ENCODE measurements at regions of chr1 and their contacts with region 1.

Region 1: DNA sequence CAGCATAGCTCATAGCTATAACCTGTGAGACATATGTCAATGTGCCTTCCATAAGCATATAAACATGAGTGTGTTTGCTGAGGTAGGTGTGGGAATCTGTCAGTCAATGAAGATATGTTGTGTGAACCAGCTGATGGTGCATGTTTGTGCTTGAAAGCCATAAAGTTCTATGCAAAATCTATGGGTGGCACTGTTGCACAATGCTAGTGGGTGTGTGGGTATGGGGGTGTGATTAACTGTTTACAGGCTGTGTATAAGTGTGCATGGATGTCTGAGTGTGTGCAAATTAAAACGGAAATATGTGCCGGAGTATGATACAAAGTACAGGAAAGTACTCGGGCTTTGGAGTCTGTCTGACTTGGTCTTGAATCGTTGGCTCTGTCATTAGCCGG is 1.0 kb upstream of the ATP2B4 start:
- DNase-seq: peak in 8 of 9 experiments; percentile 38 to 91 (median 72)
- ATAC-seq: peak; percentile 63
- H3K4me3 ChIP-seq: peak overlapping the region; percentile 77 to 89
- H3K4me3 Mint-ChIP-seq: peak overlapping the region; percentile 91
- H3K27ac ChIP-seq: peak overlapping the region; percentile 58 to 81
- H3K27ac Mint-ChIP-seq: peak overlapping the region; percentile 81
- H3K4me1 ChIP-seq: peaks cover 41% of the 10 kb centered on the region
- H3K4me1 Mint-ChIP-seq: peaks cover 44% of the 10 kb centered on the region
- H3K27me3 ChIP-seq: no peaks in the 10 kb centered on the region
- H3K27me3 Mint-ChIP-seq: no peaks in the 10 kb centered on the region
- CTCF ChIP-seq: peak; percentile 78

Region 2: GRCh38 chr1:203267347-203267846 is 358.2 kb before region 1 on chr1:
- CTCF ChIA-PET with region 1: interaction called, 35 read pairs
- POLR2A ChIA-PET with region 1: no interaction called
- intact Hi-C with region 1: loop called (anchors 5 kb)
- DNase-seq: peak; percentile 66 to 92 (median 82)
- ATAC-seq: peak; percentile 58
- H3K4me3 ChIP-seq: peak overlapping the region; percentile 67 to 76
- H3K4me3 Mint-ChIP-seq: peak overlapping the region; percentile 89
- H3K27ac ChIP-seq: peak overlapping the region; percentile 50 to 68
- H3K27ac Mint-ChIP-seq: peak overlapping the region; percentile 82
- H3K4me1 ChIP-seq: peaks cover 25% of the 10 kb centered on the region
- H3K4me1 Mint-ChIP-seq: peaks cover 20% of the 10 kb centered on the region
- H3K27me3 ChIP-seq: no peaks in the 10 kb centered on the region
- H3K27me3 Mint-ChIP-seq: no peaks in the 10 kb centered on the region
- CTCF ChIP-seq: peak; percentile 95

Region 3: DNA sequence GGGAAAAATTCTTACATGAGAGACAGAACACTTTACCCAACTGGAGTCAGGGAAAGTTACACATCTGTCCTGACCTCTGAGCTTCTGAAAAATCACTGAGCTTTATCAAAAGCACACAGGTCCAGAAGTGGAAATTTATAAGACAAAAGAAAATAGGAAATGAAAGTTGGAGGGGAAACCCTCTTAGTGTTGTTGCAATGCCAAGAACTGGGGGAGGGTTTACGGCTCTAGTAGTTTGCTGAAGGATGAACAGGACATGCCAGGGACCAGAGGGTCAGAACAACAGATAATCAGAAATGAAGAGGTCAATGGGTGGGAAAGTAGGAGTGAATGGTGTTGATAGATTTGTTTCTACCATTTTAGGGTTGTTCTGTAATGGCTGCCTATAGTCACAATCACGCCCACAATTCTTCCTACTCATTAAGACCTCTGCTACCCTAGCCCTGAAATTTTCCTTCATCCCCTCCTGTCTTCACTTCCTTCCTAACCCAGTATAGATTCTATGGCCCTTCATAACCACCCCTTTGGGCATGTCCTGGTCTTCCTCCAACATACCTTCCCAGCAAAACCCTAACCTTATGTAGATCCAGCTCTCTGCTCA is 244.4 kb before region 1 on chr1:
- CTCF ChIA-PET with region 1: no interaction called
- POLR2A ChIA-PET with region 1: no interaction called
- intact Hi-C with region 1: no loop called
- DNase-seq: peak in 1 of 9 experiments; percentile 16
- ATAC-seq: no peak
- H3K4me3 ChIP-seq: no peak overlapping the region
- H3K4me3 Mint-ChIP-seq: no peak overlapping the region
- H3K27ac ChIP-seq: no peak overlapping the region
- H3K27ac Mint-ChIP-seq: no peak overlapping the region
- H3K4me1 ChIP-seq: no peaks in the 10 kb centered on the region
- H3K4me1 Mint-ChIP-seq: no peaks in the 10 kb centered on the region
- H3K27me3 ChIP-seq: no peaks in the 10 kb centered on the region
- H3K27me3 Mint-ChIP-seq: peaks cover 16% of the 10 kb centered on the region
- CTCF ChIP-seq: no peak

Region 4: GRCh38 chr1:203486618-203487370 is 138.8 kb before region 1 on chr1:
- CTCF ChIA-PET with region 1: interaction called, 10 read pairs
- POLR2A ChIA-PET with region 1: no interaction called
- intact Hi-C with region 1: no loop called
- DNase-seq: peak in 1 of 9 experiments; percentile 15
- ATAC-seq: no peak
- H3K4me3 ChIP-seq: peak overlapping the region in 1 of 2 experiments; percentile 65
- H3K4me3 Mint-ChIP-seq: peak overlapping the region; percentile 82
- H3K27ac ChIP-seq: peak overlapping the region in 1 of 2 experiments; percentile 6
- H3K27ac Mint-ChIP-seq: no peak overlapping the region
- H3K4me1 ChIP-seq: peaks cover 13% of the 10 kb centered on the region
- H3K4me1 Mint-ChIP-seq: peaks cover 10% of the 10 kb centered on the region
- H3K27me3 ChIP-seq: no peaks in the 10 kb centered on the region
- H3K27me3 Mint-ChIP-seq: no peaks in the 10 kb centered on the region
- CTCF ChIP-seq: no peak

Region 5: GRCh38 chr1:203600782-203601736 is 24.6 kb before region 1 on chr1:
- CTCF ChIA-PET with region 1: interaction called, 32 read pairs
- POLR2A ChIA-PET with region 1: interaction called, 13 read pairs
- intact Hi-C with region 1: loop called in 1 of 2 experiments (anchors 2 kb)
- DNase-seq: no peak
- ATAC-seq: no peak
- H3K4me3 ChIP-seq: no peak overlapping the region
- H3K4me3 Mint-ChIP-seq: no peak overlapping the region
- H3K27ac ChIP-seq: no peak overlapping the region
- H3K27ac Mint-ChIP-seq: no peak overlapping the region
- H3K4me1 ChIP-seq: peaks cover 2% of the 10 kb centered on the region
- H3K4me1 Mint-ChIP-seq: peaks cover 24% of the 10 kb centered on the region
- H3K27me3 ChIP-seq: no peaks in the 10 kb centered on the region
- H3K27me3 Mint-ChIP-seq: no peaks in the 10 kb centered on the region
- CTCF ChIP-seq: no peak

Region 6: DNA sequence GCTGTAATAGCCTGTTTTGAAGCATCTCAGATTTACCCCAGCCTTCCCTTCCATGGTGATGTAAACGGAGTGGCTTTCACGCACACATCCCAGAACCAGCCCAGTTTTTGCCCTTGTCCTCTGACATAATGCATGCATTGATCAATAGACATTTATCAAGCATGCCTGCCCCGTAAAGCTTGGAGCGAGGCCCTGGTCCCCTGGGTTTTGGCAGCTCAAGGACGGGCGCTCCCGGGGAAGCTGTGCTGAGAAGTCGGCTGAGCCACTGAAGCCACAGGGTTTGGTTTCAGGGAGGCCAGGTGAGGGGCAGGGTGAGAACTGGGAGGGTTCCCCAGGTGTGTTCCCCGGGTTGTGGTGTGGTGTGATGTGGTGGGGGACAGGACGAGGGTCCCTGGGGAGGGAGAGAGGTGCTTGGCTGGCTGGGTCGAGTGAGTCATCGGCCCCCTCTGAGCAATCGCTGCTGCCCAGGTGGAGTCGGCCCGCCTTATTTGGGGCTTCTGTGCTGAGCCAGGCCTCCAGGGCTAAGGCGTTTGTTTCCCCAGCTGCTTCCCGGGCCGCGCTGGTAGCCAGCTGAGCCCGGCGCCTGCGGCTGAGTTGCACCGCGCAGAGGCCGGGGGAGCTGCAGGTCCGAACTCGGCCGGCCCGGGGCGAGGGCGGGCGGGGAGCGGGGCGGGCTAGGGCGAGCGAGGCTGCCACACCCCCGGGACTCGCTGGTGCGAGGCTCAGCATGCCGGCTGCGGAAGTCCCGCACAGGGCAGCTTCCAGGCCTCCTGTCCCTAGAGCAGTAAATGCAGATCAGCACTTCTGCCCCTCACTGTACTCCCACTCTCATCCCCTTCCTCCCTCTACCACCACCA is 24.6 kb after region 1 on chr1:
- CTCF ChIA-PET with region 1: interaction called, 30 read pairs
- POLR2A ChIA-PET with region 1: interaction called, 39 read pairs
- intact Hi-C with region 1: loop called (anchors 1 kb)
- DNase-seq: peak; percentile 35 to 86 (median 81)
- ATAC-seq: peak; percentile 69
- H3K4me3 ChIP-seq: peak overlapping the region; percentile 37
- H3K4me3 Mint-ChIP-seq: peak overlapping the region; percentile 79
- H3K27ac ChIP-seq: peak overlapping the region; percentile 12 to 77
- H3K27ac Mint-ChIP-seq: peak overlapping the region; percentile 94
- H3K4me1 ChIP-seq: peaks cover 53% of the 10 kb centered on the region
- H3K4me1 Mint-ChIP-seq: peaks cover 63% of the 10 kb centered on the region
- H3K27me3 ChIP-seq: no peaks in the 10 kb centered on the region
- H3K27me3 Mint-ChIP-seq: no peaks in the 10 kb centered on the region
- CTCF ChIP-seq: no peak

Region 7: GRCh38 chr1:203692565-203693470 is 67.2 kb after region 1 on chr1:
- CTCF ChIA-PET with region 1: interaction called, 24 read pairs
- POLR2A ChIA-PET with region 1: interaction called, 4 read pairs
- intact Hi-C with region 1: no loop called
- DNase-seq: peak in 1 of 9 experiments; percentile 23
- ATAC-seq: no peak
- H3K4me3 ChIP-seq: no peak overlapping the region
- H3K4me3 Mint-ChIP-seq: no peak overlapping the region
- H3K27ac ChIP-seq: peak overlapping the region in 1 of 2 experiments; percentile 34
- H3K27ac Mint-ChIP-seq: peak overlapping the region; percentile 69
- H3K4me1 ChIP-seq: peaks cover 10% of the 10 kb centered on the region
- H3K4me1 Mint-ChIP-seq: peaks cover 42% of the 10 kb centered on the region
- H3K27me3 ChIP-seq: no peaks in the 10 kb centered on the region
- H3K27me3 Mint-ChIP-seq: no peaks in the 10 kb centered on the region
- CTCF ChIP-seq: no peak

Region 8: GRCh38 chr1:203795441-203796235 is 170.0 kb after region 1 on chr1 and contains the starts of genes ZBED6 and ZC3H11A:
- CTCF ChIA-PET with region 1: no interaction called
- POLR2A ChIA-PET with region 1: interaction called, 3 read pairs
- intact Hi-C with region 1: loop called in 1 of 2 experiments (anchors 1 kb)
- DNase-seq: peak; percentile 96 to 100 (median 97)
- ATAC-seq: peak; percentile 96
- H3K4me3 ChIP-seq: peak within 1 kb of the TSS; percentile 67 to 73
- H3K4me3 Mint-ChIP-seq: peak within 1 kb of the TSS; percentile 96
- H3K27ac ChIP-seq: peak within 1 kb of the TSS; percentile 54 to 92
- H3K27ac Mint-ChIP-seq: peak within 1 kb of the TSS; percentile 97
- H3K4me1 ChIP-seq: peaks cover 42% of the 10 kb centered on the region
- H3K4me1 Mint-ChIP-seq: peaks cover 53% of the 10 kb centered on the region
- H3K27me3 ChIP-seq: no peaks in the 10 kb centered on the region
- H3K27me3 Mint-ChIP-seq: no peaks in the 10 kb centered on the region
- CTCF ChIP-seq: no peak
- total RNA-seq, gene ZBED6: 25.0 to 25.8 TPM
- total RNA-seq, gene ZC3H11A: 72.7 to 77.2 TPM

Region 9: GRCh38 chr1:204307334-204307883 is 681.8 kb after region 1 on chr1:
- CTCF ChIA-PET with region 1: no interaction called
- POLR2A ChIA-PET with region 1: no interaction called
- intact Hi-C with region 1: no loop called
- DNase-seq: no peak
- ATAC-seq: no peak
- H3K4me3 ChIP-seq: no peak overlapping the region
- H3K4me3 Mint-ChIP-seq: no peak overlapping the region
- H3K27ac ChIP-seq: no peak overlapping the region
- H3K27ac Mint-ChIP-seq: no peak overlapping the region
- H3K4me1 ChIP-seq: no peaks in the 10 kb centered on the region
- H3K4me1 Mint-ChIP-seq: no peaks in the 10 kb centered on the region
- H3K27me3 ChIP-seq: no peaks in the 10 kb centered on the region
- H3K27me3 Mint-ChIP-seq: peaks cover 24% of the 10 kb centered on the region
- CTCF ChIP-seq: no peak